ENCODE measurements at regions of chr3 and their contacts with region 1.

Region 1: GRCh38 chr3:108406661-108407206 is 103.7 kb downstream of the MYH15 start:
- DNase-seq: peak; percentile 73
- CTCF ChIP-seq: peak; percentile 75

Region 2: GRCh38 chr3:107927361-107928083 is 479.2 kb before region 1 on chr3:
- in situ Hi-C with region 1: loop called (anchors 25 kb)
- DNase-seq: peak; percentile 85
- CTCF ChIP-seq: peak; percentile 97

Region 3: GRCh38 chr3:108145578-108145977 is 261.2 kb before region 1 on chr3:
- in situ Hi-C with region 1: loop called (anchors 10 kb)
- DNase-seq: no peak
- CTCF ChIP-seq: no peak

Region 4: DNA sequence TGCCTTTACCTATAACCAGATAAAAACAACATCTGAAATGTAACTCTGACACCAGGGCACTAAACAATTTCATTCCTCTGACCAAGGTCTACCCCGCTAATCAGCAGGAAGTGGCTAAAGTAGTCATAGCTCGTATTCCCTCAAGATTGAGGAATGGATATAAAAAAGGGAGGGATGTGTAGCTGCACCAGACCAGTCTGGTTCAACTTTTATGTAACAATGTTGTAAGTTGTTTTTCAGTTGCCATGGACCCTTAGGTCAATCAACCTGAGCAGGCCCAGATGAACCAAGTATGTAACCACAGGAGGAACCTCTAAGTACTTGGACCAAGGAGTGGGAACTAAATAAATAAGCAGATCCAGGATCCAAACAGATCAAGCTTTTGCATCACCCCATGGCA is 156.1 kb before region 1 on chr3:
- in situ Hi-C with region 1: no loop called
- DNase-seq: no peak
- CTCF ChIP-seq: no peak

Region 5: GRCh38 chr3:108271626-108272025 is 135.1 kb before region 1 on chr3:
- in situ Hi-C with region 1: no loop called
- DNase-seq: no peak
- CTCF ChIP-seq: no peak

Region 6: DNA sequence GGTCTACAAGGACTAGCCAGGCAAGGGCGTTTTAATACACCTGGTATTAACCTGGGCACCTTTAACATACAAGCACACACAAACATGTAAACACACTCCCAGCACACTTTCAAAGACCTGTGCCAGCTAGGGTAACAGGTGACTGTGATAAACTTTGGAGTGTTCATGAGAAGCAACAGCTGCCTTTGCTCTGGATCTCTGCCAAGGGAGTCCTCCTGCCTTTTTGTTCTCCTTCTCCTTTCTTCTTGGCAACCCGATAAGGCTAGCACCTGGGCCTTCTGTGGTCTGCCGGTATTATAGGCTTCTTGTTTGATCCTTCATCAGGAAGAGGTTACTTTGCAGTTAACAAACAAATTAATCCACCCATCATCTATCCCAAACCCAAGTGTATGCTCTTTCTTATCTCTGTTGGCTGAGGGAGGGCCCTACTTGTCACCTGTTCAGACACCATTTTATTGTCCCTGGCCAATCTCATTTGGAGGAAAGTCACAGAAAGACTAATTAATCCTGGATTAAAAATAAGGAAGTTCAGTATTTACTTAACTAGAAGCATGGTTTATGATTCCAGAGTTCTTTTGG is 350.8 kb after region 1 on chr3 and contains the start of gene RETNLB:
- in situ Hi-C with region 1: no loop called
- DNase-seq: no peak
- CTCF ChIP-seq: no peak